GM12878 (cell line): ENCODE measurements at regions of chr11 and their contacts with region 1.

Region 1: DNA sequence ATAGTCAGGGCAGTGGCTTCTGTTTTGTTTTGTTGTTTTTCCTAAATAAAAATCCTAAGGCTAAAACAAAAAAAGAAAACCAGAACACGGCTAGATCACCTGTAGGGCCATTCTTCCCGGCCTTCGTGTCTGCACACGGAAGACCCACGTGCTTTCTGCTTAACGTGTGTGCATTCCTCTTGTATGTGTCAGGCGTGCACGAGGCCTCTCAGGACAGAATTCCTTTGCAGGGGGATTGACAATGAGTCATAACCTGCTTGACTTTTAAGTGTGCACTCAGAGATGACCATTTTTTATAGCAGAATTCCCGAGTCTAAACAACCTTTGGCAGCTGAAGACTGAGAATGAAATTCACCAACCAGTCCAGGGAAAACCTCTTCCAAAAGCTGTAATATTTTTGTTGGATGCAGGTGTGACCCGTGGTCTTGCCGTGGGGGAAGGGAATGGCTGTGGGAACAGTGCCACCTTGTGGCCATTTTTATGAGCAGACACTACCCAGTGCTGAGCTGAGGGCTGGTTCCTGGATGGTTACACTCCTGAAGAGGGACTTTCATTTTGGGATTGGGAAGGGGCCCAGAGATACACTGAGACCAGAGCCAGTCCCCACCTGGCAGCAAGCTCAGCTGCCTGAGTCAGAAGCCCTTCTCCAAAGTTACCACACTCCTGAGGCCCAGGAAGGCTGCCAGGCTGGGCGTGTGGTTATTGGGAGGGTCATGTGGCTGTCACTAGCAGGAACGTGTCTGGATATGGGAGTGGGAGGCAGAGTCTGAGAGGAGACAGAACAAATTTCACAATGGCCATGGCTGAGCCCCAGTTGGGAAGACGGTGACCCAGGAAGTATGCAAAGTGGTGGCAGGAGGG is 35.8 kb upstream of the DKK3 start:
- DNase-seq: no peak
- ATAC-seq: peak; percentile 90
- H3K4me3 ChIP-seq: no peak overlapping the region
- H3K27ac ChIP-seq: no peak overlapping the region
- H3K4me1 ChIP-seq: no peaks in the 10 kb centered on the region
- H3K27me3 ChIP-seq: no peaks in the 10 kb centered on the region
- CTCF ChIP-seq: peak; percentile 72 to 92 (median 85)
- EP300 ChIP-seq: no peak
- POLR2A ChIP-seq: no peak
- RAD21 ChIP-seq: peak; percentile 88

Region 2: DNA sequence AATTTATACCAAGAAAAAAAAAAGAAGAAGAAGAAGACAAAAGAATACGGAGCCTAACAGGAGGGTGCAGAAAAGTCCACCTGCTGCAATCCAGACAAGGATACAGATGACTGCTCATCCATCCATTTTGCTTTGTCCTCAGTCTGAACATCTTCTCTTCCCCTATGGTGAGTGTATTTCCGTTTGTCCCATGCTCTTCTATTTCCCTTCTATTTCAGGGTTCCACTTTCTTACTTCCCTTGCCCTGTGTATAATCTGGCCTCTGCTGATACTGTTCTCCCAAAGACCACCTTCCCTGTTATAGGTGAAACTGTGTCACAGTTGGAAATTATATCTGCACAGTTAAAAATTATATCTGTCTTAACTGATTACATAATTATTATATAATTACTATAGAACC is 251.1 kb before region 1 on chr11:
- CTCF ChIA-PET with region 1: interaction called, 22 read pairs
- POLR2A ChIA-PET with region 1: no interaction called
- RAD21 ChIA-PET with region 1: no interaction called
- SMC1A ChIA-PET with region 1: interaction called, 3 read pairs
- in situ Hi-C with region 1: loop called (anchors 5 kb)
- intact Hi-C with region 1: loop called (anchors 1 kb)
- DNase-seq: no peak
- ATAC-seq: no peak
- H3K4me3 ChIP-seq: no peak overlapping the region
- H3K27ac ChIP-seq: no peak overlapping the region
- H3K4me1 ChIP-seq: no peaks in the 10 kb centered on the region
- H3K27me3 ChIP-seq: no peaks in the 10 kb centered on the region; a peak in 1 of 4 replicates
- CTCF ChIP-seq: no peak
- EP300 ChIP-seq: no peak
- POLR2A ChIP-seq: no peak
- RAD21 ChIP-seq: no peak

Region 3: DNA sequence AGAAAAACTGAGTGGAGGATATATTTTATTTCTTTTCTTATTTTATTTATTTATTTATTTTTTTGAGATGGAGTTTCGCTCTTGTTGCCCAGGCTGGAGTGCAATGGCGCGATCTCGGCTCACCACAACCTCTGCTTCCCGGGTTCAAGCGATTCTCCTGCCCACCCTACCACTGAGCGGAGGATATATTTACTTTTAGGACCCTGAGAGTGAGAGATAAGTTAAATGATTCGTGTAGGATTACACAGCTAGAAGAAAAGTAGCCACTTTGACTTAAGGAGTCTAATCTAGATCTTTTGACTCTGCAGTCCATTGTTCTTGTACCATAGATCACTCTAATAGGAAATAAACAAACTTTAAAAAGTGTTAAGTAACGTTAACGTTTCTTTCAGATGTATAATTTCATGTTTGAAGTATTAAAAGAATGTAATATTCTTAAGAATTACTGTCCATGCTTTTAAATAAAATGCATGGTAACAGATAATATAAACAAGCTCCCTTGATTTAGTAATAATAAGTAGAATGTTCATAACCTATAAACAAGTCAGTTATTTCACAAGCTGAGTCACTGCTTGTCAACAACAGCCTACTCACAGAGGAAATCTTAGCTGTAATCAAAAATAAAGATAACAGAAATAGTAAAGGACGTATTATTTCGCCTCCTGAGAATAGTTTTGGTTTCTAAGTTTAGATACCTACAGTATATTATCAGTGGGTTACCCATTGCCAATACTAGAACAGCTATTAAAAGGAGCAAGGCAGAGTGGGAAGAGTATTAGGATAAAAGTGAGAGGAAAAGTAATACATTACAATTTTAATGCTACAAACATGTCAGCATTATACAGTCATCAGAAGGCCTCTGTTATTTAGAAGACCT is 183.8 kb before region 1 on chr11:
- CTCF ChIA-PET with region 1: no interaction called
- POLR2A ChIA-PET with region 1: no interaction called
- RAD21 ChIA-PET with region 1: no interaction called
- SMC1A ChIA-PET with region 1: no interaction called
- in situ Hi-C with region 1: no loop called
- intact Hi-C with region 1: no loop called
- DNase-seq: no peak
- ATAC-seq: no peak
- H3K4me3 ChIP-seq: no peak overlapping the region
- H3K27ac ChIP-seq: no peak overlapping the region
- H3K4me1 ChIP-seq: peaks cover 12% of the 10 kb centered on the region
- H3K27me3 ChIP-seq: no peaks in the 10 kb centered on the region
- CTCF ChIP-seq: no peak
- EP300 ChIP-seq: no peak
- POLR2A ChIP-seq: no peak
- RAD21 ChIP-seq: no peak

Region 4: DNA sequence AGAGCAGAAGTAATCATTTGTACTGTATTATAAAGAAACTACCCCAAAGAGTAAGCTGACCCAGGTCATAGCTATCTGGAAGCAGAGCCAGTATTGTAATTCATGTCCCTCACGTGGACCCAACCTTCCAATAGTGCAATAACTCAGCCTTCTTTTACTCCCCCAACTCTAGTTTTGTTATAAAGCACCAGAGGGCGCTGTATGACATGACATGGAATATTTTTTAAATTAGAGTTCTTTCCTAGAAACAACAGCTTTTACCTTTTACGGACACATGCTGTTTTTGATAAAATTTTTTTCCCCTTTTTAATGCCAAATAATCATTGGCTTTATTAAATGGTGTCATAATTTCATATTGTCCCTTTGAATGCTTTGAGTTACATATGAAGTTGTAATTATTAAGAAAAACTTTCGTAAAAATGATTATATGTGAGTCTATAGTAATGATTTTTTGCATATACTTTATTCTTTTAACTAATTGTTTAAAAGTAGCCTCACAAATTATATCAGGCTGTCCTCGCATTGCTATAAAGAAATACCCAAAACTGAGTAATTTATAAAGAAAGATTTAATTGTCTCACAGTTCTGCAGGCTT is 112.6 kb before region 1 on chr11:
- CTCF ChIA-PET with region 1: interaction called, 6 read pairs
- POLR2A ChIA-PET with region 1: no interaction called
- RAD21 ChIA-PET with region 1: interaction called, 3 read pairs
- SMC1A ChIA-PET with region 1: no interaction called
- in situ Hi-C with region 1: no loop called
- intact Hi-C with region 1: loop called (anchors 1 kb)
- DNase-seq: no peak
- ATAC-seq: peak; percentile 90
- H3K4me3 ChIP-seq: no peak overlapping the region
- H3K27ac ChIP-seq: no peak overlapping the region
- H3K4me1 ChIP-seq: no peaks in the 10 kb centered on the region
- H3K27me3 ChIP-seq: no peaks in the 10 kb centered on the region
- CTCF ChIP-seq: peak; percentile 30 to 54 (median 39); a peak in 5 of 6 replicates
- EP300 ChIP-seq: no peak
- POLR2A ChIP-seq: no peak
- RAD21 ChIP-seq: peak; percentile 21; the same call in 1 of the 2 replicates

Region 5: GRCh38 chr11:12019866-12020416 is 24.2 kb before region 1 on chr11:
- CTCF ChIA-PET with region 1: no interaction called
- POLR2A ChIA-PET with region 1: no interaction called
- RAD21 ChIA-PET with region 1: no interaction called
- SMC1A ChIA-PET with region 1: no interaction called
- in situ Hi-C with region 1: no loop called
- intact Hi-C with region 1: no loop called
- DNase-seq: no peak
- ATAC-seq: no peak
- H3K4me3 ChIP-seq: no peak overlapping the region
- H3K27ac ChIP-seq: no peak overlapping the region
- H3K4me1 ChIP-seq: no peaks in the 10 kb centered on the region
- H3K27me3 ChIP-seq: no peaks in the 10 kb centered on the region
- CTCF ChIP-seq: no peak
- EP300 ChIP-seq: no peak
- POLR2A ChIP-seq: no peak
- RAD21 ChIP-seq: no peak

Region 6: GRCh38 chr11:12032968-12033367 is 11.2 kb before region 1 on chr11:
- CTCF ChIA-PET with region 1: interaction called, 11 read pairs
- POLR2A ChIA-PET with region 1: no interaction called
- RAD21 ChIA-PET with region 1: interaction called, 3 read pairs
- SMC1A ChIA-PET with region 1: no interaction called
- in situ Hi-C with region 1: no loop called
- intact Hi-C with region 1: no loop called
- DNase-seq: no peak
- ATAC-seq: no peak
- H3K4me3 ChIP-seq: no peak overlapping the region
- H3K27ac ChIP-seq: no peak overlapping the region
- H3K4me1 ChIP-seq: no peaks in the 10 kb centered on the region
- H3K27me3 ChIP-seq: no peaks in the 10 kb centered on the region
- CTCF ChIP-seq: no peak
- EP300 ChIP-seq: no peak
- POLR2A ChIP-seq: no peak
- RAD21 ChIP-seq: no peak

Region 7: GRCh38 chr11:12060385-12060985 is 16.3 kb after region 1 on chr11:
- CTCF ChIA-PET with region 1: interaction called, 21 read pairs
- POLR2A ChIA-PET with region 1: no interaction called
- RAD21 ChIA-PET with region 1: no interaction called
- SMC1A ChIA-PET with region 1: interaction called, 3 read pairs
- in situ Hi-C with region 1: no loop called
- intact Hi-C with region 1: no loop called
- DNase-seq: no peak
- ATAC-seq: no peak
- H3K4me3 ChIP-seq: no peak overlapping the region
- H3K27ac ChIP-seq: no peak overlapping the region
- H3K4me1 ChIP-seq: no peaks in the 10 kb centered on the region
- H3K27me3 ChIP-seq: peaks cover 0 to 2% of the 10 kb centered on the region in 2 experiments; a peak in 2 of 4 replicates
- CTCF ChIP-seq: no peak
- EP300 ChIP-seq: no peak
- POLR2A ChIP-seq: no peak
- RAD21 ChIP-seq: no peak

Region 8: DNA sequence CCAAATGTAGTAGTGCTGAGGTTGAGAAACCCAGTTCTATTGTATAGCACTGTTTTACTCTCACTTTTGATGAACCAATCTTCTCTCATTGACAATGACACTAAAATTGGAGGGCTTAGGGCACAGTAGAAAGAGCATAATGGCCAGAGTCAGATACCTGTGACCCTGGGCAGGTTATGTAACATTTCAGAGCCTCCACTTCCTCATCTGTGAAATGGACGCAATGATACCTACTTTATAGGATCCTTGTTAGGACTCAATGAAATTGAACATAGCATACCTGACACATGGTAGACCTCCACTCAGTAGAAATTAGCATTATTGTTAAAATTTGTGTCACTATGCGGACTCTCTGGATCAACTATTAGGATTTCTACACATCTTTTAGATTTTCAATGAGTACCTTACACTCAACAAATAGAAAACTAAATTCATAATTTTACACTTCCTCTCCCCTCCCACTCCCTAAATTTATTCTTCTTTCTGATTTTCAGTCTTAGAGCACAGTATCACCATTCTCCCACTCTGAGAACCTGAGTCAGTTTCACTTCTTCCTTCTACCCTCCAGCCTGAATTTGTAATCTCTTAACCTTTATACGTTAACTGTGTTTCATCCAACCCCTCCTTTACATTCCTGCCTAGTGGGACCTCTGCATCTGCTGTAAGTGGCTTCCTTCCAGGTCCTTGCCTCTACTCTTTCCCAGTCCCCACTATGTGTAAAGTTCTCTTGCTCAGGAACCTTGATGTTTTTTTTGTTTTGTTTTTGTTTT is 144.5 kb after region 1 on chr11:
- CTCF ChIA-PET with region 1: no interaction called
- POLR2A ChIA-PET with region 1: no interaction called
- RAD21 ChIA-PET with region 1: no interaction called
- SMC1A ChIA-PET with region 1: no interaction called
- in situ Hi-C with region 1: no loop called
- intact Hi-C with region 1: no loop called
- DNase-seq: no peak
- ATAC-seq: peak; percentile 90
- H3K4me3 ChIP-seq: no peak overlapping the region; the same call in 1 of the 2 replicates
- H3K27ac ChIP-seq: no peak overlapping the region
- H3K4me1 ChIP-seq: peaks cover 16% of the 10 kb centered on the region
- H3K27me3 ChIP-seq: no peaks in the 10 kb centered on the region
- CTCF ChIP-seq: no peak
- EP300 ChIP-seq: peak in 1 of 2 experiments; percentile 28; a peak in 1 of 4 replicates
- POLR2A ChIP-seq: no peak
- RAD21 ChIP-seq: no peak

Region 9: DNA sequence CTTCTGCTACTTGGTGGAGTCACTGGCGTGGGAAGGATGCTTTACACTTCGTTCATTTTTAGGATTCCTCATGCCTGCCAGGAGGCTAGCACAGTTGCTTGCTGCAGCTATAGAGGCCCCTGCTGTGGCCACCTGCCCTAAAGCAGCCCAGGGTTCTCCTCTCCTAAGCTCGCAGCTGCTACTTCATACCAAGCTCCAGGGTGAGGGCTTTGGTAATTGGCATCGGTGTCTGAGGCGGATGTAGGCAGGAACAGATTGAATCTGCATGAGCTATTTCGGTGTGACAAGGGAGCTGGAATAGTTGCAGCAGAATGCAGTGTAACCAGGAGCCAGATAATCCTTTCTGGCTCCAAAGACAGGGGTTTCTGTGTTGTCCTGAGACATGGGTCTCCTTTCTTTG is 199.3 kb after region 1 on chr11:
- CTCF ChIA-PET with region 1: interaction called, 104 read pairs
- POLR2A ChIA-PET with region 1: no interaction called
- RAD21 ChIA-PET with region 1: interaction called, 6 read pairs
- SMC1A ChIA-PET with region 1: interaction called, 12 read pairs
- in situ Hi-C with region 1: loop called (anchors 5 kb)
- intact Hi-C with region 1: no loop called
- DNase-seq: no peak
- ATAC-seq: no peak
- H3K4me3 ChIP-seq: no peak overlapping the region
- H3K27ac ChIP-seq: no peak overlapping the region
- H3K4me1 ChIP-seq: no peaks in the 10 kb centered on the region
- H3K27me3 ChIP-seq: no peaks in the 10 kb centered on the region; a peak in 2 of 4 replicates
- CTCF ChIP-seq: no peak
- EP300 ChIP-seq: no peak
- POLR2A ChIP-seq: no peak
- RAD21 ChIP-seq: no peak

Region 10: GRCh38 chr11:12281571-12282478 is 237.6 kb after region 1 on chr11:
- CTCF ChIA-PET with region 1: interaction called, 214 read pairs
- POLR2A ChIA-PET with region 1: no interaction called
- RAD21 ChIA-PET with region 1: interaction called, 59 read pairs
- SMC1A ChIA-PET with region 1: interaction called, 43 read pairs
- in situ Hi-C with region 1: loop called (anchors 5 kb)
- intact Hi-C with region 1: loop called (anchors 1 kb)
- DNase-seq: peak; percentile 21
- ATAC-seq: peak; percentile 89
- H3K4me3 ChIP-seq: no peak overlapping the region
- H3K27ac ChIP-seq: no peak overlapping the region
- H3K4me1 ChIP-seq: no peaks in the 10 kb centered on the region
- H3K27me3 ChIP-seq: no peaks in the 10 kb centered on the region; a peak in 1 of 4 replicates
- CTCF ChIP-seq: peak; percentile 87 to 95 (median 93)
- EP300 ChIP-seq: no peak
- POLR2A ChIP-seq: no peak
- RAD21 ChIP-seq: peak; percentile 100